ENCODE measurements at regions of chr4 and their contacts with region 1.

Region 1: DNA sequence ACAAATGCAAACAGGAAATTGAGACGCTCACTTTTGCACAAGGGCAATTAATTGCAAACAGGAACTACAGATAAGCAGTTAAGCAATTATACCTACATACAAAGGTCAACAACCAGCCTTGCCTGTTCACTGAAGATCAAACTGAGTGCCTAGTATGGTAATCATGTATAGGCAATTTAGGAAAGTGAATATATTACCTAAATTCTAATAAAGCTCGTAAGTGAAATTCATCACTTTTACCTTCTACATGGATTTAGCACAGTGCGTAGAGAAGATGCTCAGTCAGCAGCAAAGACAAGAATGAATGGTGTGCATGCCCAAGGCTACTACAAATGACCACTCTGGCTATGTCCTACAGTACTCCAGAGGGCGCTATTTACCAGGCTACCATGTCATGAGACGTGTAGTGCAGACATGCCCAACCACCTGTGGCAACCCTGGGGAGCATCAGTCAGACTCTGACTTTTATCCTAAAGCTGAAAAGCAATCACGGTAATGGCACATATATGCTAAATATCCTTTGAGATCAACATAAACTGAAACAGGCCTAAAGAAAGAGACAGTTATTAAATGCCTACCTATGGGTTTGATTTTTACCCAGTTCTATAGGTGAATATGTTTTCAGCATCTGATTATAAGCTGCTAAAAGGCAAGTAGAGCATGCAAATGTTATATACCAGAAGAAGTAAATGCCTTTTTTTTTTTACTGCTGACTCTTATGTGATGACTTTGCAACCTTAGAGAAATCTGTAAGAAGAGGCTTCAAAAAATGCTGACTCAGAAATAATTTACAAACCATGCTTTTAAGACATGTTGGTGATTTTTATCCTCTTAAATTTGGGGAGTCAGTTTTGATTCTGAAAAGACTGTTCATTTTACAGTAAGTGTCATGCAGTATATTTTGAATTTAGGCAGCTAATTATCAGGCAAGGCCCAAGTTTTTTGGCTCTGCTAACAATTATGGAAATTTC is 178.0 kb downstream of the PPP3CA start:
- DNase-seq: peak; percentile 84
- ATAC-seq: peak; percentile 95
- H3K4me3 ChIP-seq: no peak overlapping the region
- H3K27ac ChIP-seq: peak overlapping the region; percentile 98; the same call in 1 of the 2 replicates
- H3K4me1 ChIP-seq: peaks cover 91 to 95% of the 10 kb centered on the region in 2 experiments
- H3K27me3 ChIP-seq: no peaks in the 10 kb centered on the region
- CTCF ChIP-seq: peak; percentile 54 to 92 (median 83); a peak in 5 of 6 replicates
- POLR2A ChIP-seq: no peak
- RAD21 ChIP-seq: peak; percentile 97

Region 2: GRCh38 chr4:100421361-100421978 is 747.9 kb before region 1 on chr4:
- CTCF ChIA-PET with region 1: no interaction called
- POLR2A ChIA-PET with region 1: no interaction called
- RAD21 ChIA-PET with region 1: no interaction called
- intact Hi-C with region 1: loop called (anchors 5 kb)
- DNase-seq: peak; percentile 51
- ATAC-seq: peak; percentile 85
- H3K4me3 ChIP-seq: no peak overlapping the region
- H3K27ac ChIP-seq: no peak overlapping the region
- H3K4me1 ChIP-seq: peaks cover 4 to 5% of the 10 kb centered on the region in 2 experiments; a peak in 2 of 4 replicates
- H3K27me3 ChIP-seq: no peaks in the 10 kb centered on the region
- CTCF ChIP-seq: peak; percentile 51 to 80 (median 68)
- POLR2A ChIP-seq: no peak
- RAD21 ChIP-seq: peak; percentile 88

Region 3: GRCh38 chr4:100848869-100849268 is 320.5 kb before region 1 on chr4:
- CTCF ChIA-PET with region 1: no interaction called
- POLR2A ChIA-PET with region 1: no interaction called
- RAD21 ChIA-PET with region 1: no interaction called
- intact Hi-C with region 1: loop called (anchors 10 kb)
- DNase-seq: peak; percentile 38
- ATAC-seq: peak; percentile 95
- H3K4me3 ChIP-seq: no peak overlapping the region
- H3K27ac ChIP-seq: no peak overlapping the region
- H3K4me1 ChIP-seq: peaks cover 0 to 5% of the 10 kb centered on the region in 2 experiments; a peak in 2 of 4 replicates
- H3K27me3 ChIP-seq: no peaks in the 10 kb centered on the region
- CTCF ChIP-seq: peak; percentile 46 to 67 (median 47); a peak in 5 of 6 replicates
- POLR2A ChIP-seq: no peak
- RAD21 ChIP-seq: peak; percentile 44

Region 4: DNA sequence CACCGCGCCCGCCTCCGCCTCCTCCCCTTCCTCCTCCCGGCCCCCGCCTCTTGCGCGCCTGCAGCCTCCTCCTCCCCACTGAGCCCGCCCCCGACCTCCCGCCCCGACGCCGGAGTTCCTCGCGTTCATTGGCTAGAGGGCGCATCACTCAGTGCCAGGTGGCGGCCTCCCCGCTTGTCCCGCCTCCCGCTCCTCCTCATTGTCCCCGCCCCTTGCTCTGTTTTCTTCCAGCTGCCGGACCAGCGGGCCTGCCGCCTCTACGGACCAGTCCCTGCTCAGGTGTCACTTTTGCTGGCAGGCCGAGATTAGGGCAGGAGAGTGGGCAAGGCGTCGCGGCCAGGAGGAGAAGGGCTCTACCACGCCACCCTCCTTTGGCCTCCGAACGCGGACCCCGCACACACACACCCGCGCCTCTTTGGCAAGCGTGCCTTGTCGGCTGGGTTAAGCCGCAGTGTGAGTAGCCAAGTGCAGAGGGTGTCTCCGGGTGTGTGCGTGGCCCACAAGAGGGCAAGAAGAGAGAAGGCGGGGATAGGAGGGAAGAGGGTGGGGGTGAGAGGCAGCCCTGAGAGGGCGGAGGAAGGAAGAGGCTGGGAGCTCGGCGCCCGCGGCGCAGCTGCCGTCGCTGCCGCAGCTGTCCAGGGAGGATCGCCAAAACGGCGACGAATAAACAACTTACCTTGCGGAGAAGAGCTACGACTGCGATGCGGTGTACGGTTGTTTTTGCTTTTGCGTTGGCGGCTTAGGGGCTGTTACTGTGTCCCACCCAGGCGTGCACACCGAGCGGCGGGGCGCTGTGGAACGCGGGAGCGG is 178.4 kb after region 1 on chr4:
- CTCF ChIA-PET with region 1: no interaction called
- POLR2A ChIA-PET with region 1: no interaction called
- RAD21 ChIA-PET with region 1: no interaction called
- intact Hi-C with region 1: loop called (anchors 5 kb)
- DNase-seq: peak; percentile 92
- ATAC-seq: peak; percentile 84
- H3K4me3 ChIP-seq: peak overlapping the region; percentile 76 to 84
- H3K27ac ChIP-seq: peak overlapping the region; percentile 94
- H3K4me1 ChIP-seq: peaks cover 25 to 39% of the 10 kb centered on the region in 2 experiments
- H3K27me3 ChIP-seq: no peaks in the 10 kb centered on the region
- CTCF ChIP-seq: no peak
- POLR2A ChIP-seq: peak; percentile 56
- RAD21 ChIP-seq: no peak

Region 5: DNA sequence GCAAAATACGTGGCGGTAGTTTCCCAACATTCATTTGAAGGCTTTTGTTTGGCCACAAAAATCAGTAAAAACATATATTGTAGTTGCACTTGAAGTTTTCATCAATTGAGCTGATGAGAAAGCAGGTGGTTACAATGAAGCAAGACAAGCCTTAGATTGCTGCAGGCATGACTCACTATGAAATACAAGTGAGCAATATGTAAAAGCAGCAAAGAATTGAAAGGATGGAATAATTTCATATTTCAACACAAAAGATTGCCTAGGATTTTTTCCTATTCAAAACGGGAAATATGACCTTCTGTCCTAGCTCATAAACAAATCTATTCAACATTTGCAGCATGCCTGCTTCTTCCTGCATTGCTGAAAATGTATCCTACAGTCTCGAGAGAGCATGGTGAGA is 430.3 kb after region 1 on chr4:
- CTCF ChIA-PET with region 1: no interaction called
- POLR2A ChIA-PET with region 1: no interaction called
- RAD21 ChIA-PET with region 1: interaction called in 1 of 2 experiments, 3 read pairs
- intact Hi-C with region 1: loop called (anchors 5 kb)
- DNase-seq: no peak
- ATAC-seq: no peak
- H3K4me3 ChIP-seq: no peak overlapping the region
- H3K27ac ChIP-seq: no peak overlapping the region
- H3K4me1 ChIP-seq: no peaks in the 10 kb centered on the region
- H3K27me3 ChIP-seq: no peaks in the 10 kb centered on the region
- CTCF ChIP-seq: no peak
- POLR2A ChIP-seq: no peak
- RAD21 ChIP-seq: no peak

Region 6: GRCh38 chr4:101730291-101731117 is 561.2 kb after region 1 on chr4:
- CTCF ChIA-PET with region 1: interaction called, 17 read pairs
- POLR2A ChIA-PET with region 1: interaction called, 3 read pairs
- RAD21 ChIA-PET with region 1: no interaction called
- intact Hi-C with region 1: loop called (anchors 1 kb)
- DNase-seq: peak; percentile 78
- ATAC-seq: peak; percentile 100
- H3K4me3 ChIP-seq: no peak overlapping the region
- H3K27ac ChIP-seq: no peak overlapping the region
- H3K4me1 ChIP-seq: no peaks in the 10 kb centered on the region; a peak in 1 of 4 replicates
- H3K27me3 ChIP-seq: no peaks in the 10 kb centered on the region
- CTCF ChIP-seq: peak; percentile 47 to 75 (median 69); a peak in 5 of 6 replicates
- POLR2A ChIP-seq: no peak
- RAD21 ChIP-seq: peak; percentile 90

Region 7: DNA sequence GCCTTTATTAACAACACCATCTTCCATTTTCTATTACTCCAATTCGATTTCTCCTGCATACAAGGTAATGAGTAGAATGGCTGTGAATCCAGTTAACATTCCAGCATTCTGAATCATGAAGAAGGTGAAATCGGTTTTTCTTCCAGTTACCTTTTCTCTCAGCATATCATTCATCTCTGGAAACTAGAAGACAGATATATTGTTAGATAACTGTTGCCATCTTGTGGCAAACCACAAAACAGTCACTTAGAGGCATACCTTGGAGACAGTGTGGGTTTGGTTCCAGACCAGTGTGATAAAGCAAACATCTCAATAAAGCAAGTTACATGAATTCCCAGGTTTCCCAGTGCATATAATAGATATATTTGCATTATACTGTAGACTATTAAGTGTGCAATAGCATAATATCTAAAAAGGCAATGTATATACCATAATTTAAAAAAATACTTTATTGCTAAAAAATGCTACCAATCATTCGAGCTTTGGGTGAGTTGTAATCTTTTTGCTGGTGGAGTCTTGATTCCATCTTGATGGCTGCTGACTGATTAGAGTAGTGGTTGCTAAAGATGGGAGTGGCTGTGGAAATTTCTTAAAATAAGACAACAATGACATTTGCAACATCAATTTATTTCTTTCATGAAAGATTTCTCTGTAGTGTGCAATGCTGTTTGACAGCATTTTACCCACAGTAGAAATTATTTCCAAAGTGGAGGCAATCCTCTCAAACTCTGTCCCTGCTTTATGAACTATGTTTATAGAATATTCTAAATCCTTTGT is 1093.9 kb after region 1 on chr4:
- CTCF ChIA-PET with region 1: interaction called, 5 read pairs
- POLR2A ChIA-PET with region 1: no interaction called
- RAD21 ChIA-PET with region 1: interaction called in 1 of 2 experiments, 4 read pairs
- intact Hi-C with region 1: loop called (anchors 2 kb)
- DNase-seq: peak; percentile 51
- ATAC-seq: peak; percentile 96
- H3K4me3 ChIP-seq: no peak overlapping the region
- H3K27ac ChIP-seq: no peak overlapping the region
- H3K4me1 ChIP-seq: peaks cover 4 to 5% of the 10 kb centered on the region in 2 experiments
- H3K27me3 ChIP-seq: no peaks in the 10 kb centered on the region
- CTCF ChIP-seq: peak; percentile 51 to 75 (median 52); a peak in 5 of 6 replicates
- POLR2A ChIP-seq: no peak
- RAD21 ChIP-seq: peak; percentile 90

Measured in HCT116 (cell line).